ENCODE measurements at regions of chr2 and their contacts with region 1.

Region 1: DNA sequence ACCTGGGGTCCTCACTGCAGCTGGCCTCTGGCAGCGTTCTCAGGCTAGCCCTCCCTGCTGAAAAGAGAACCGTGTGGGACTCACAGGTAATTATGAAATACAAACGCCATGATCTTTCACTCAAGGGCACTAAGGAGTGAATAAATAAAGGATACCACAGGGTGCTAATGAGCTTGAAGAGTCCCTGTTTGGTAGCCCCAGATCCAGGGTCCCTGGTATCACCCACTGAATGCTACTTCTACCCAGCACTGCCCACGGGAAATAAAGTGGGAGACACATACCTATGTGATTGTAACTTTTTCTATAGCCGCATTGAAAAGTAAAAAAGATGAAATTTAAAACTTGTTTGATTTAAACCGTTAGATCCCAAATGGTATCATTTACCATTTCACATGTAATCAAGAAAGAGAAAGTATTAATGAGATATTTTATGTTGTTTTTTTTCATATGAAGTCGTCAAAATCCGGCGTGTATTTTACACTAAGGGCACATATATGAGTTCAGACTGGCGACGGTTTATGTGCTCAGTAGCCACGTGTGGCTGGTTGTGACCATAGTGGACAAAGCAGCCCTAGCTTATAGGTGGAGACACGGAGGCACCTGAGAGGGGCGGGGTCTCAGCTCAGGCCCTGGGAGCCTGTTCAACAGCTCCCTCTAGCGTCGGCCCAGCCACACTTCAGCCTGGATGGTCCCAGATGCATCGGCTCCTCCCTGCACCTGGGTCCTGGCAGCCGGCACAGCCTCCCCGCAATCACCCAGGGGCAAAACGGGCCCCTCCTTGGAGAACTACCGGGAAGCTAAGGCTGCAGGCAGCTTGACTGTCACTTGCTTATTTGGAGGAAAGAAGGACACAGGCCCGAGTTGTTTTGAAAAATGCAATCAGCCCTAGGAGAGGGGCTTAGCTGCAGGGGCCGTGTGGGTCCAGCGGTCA is 39.2 kb downstream of the ODC1 start:
- DNase-seq: peak; percentile 71
- ATAC-seq: peak; percentile 84
- H3K4me3 ChIP-seq: peak overlapping the region; percentile 58; the same call in 1 of the 2 replicates
- H3K27ac ChIP-seq: peak overlapping the region; percentile 84
- H3K4me1 ChIP-seq: peaks cover 44% of the 10 kb centered on the region
- H3K27me3 ChIP-seq: no peaks in the 10 kb centered on the region
- CTCF ChIP-seq: peak; percentile 95 to 99 (median 99); a peak in 5 of 6 replicates
- EP300 ChIP-seq: no peak; a peak in 1 of 4 replicates
- POLR2A ChIP-seq: no peak
- RAD21 ChIP-seq: peak; percentile 87

Region 2: GRCh38 chr2:10079234-10079869 is 329.6 kb before region 1 on chr2:
- CTCF ChIA-PET with region 1: interaction called, 92 read pairs
- POLR2A ChIA-PET with region 1: interaction called, 14 read pairs
- RAD21 ChIA-PET with region 1: interaction called, 44 read pairs
- SMC1A ChIA-PET with region 1: interaction called, 34 read pairs
- in situ Hi-C with region 1: no loop called
- intact Hi-C with region 1: no loop called
- DNase-seq: no peak
- ATAC-seq: peak; percentile 28
- H3K4me3 ChIP-seq: peak overlapping the region; percentile 57
- H3K27ac ChIP-seq: peak overlapping the region; percentile 40; the same call in 1 of the 2 replicates
- H3K4me1 ChIP-seq: peaks cover 50% of the 10 kb centered on the region
- H3K27me3 ChIP-seq: no peaks in the 10 kb centered on the region
- CTCF ChIP-seq: no peak
- EP300 ChIP-seq: no peak
- POLR2A ChIP-seq: no peak
- RAD21 ChIP-seq: no peak

Region 3: GRCh38 chr2:10133007-10133647 is 275.8 kb before region 1 on chr2:
- CTCF ChIA-PET with region 1: interaction called, 53 read pairs
- POLR2A ChIA-PET with region 1: interaction called, 15 read pairs
- RAD21 ChIA-PET with region 1: interaction called, 181 read pairs
- SMC1A ChIA-PET with region 1: interaction called, 45 read pairs
- in situ Hi-C with region 1: no loop called
- intact Hi-C with region 1: no loop called
- DNase-seq: no peak
- ATAC-seq: peak; percentile 8
- H3K4me3 ChIP-seq: no peak overlapping the region
- H3K27ac ChIP-seq: no peak overlapping the region
- H3K4me1 ChIP-seq: no peaks in the 10 kb centered on the region
- H3K27me3 ChIP-seq: no peaks in the 10 kb centered on the region
- CTCF ChIP-seq: no peak
- EP300 ChIP-seq: no peak
- POLR2A ChIP-seq: peak; percentile 66
- RAD21 ChIP-seq: no peak

Region 4: DNA sequence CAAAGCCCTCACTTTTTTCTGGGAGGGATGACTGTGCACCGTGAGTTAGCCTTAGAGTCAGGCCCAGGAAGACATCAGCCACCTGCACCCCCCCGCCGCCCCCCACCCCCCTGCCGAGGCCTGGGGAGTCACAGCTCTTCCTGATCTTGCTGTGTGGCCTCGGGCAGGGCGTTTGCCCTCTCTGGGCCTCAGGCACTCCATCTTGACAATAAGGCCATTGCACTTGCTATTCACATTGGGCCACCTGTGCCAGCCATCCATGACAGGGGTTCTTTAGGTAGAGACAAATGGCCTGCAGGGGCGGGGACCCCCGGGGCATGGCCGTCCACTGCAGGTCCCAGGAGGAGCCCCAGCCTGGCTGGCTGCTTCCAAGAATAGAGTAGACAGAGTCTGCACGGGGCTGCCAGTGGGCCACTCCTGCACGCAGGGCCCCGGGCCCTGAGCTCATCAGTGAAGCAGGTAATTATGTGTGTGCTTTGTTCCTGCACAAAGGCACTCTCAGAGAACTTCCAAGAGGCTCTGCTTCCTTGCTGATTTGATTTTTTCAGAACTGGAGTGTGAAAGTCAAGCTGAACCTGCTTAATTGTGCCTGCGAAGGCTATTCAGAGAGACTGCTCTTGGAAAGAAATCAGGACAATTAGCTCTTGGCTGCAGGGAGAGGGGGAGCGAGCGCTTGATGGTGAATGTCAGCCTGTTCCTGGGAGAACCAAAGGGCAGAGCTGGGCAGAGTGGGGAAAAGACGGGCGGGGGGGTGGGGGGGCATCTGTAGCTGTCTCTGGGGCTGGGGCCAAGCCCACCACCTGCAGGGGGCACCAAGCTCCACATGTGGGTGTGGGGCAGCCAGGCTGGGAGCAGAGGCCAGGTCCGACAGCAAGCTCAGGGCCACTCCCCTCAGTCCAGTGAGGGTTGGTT is 246.1 kb before region 1 on chr2:
- CTCF ChIA-PET with region 1: interaction called, 20 read pairs
- POLR2A ChIA-PET with region 1: no interaction called
- RAD21 ChIA-PET with region 1: interaction called, 12 read pairs
- SMC1A ChIA-PET with region 1: interaction called, 13 read pairs
- in situ Hi-C with region 1: no loop called
- intact Hi-C with region 1: no loop called
- DNase-seq: no peak
- ATAC-seq: no peak
- H3K4me3 ChIP-seq: no peak overlapping the region
- H3K27ac ChIP-seq: no peak overlapping the region
- H3K4me1 ChIP-seq: no peaks in the 10 kb centered on the region
- H3K27me3 ChIP-seq: no peaks in the 10 kb centered on the region
- CTCF ChIP-seq: peak in 1 of 3 experiments; percentile 7; a peak in 1 of 6 replicates
- EP300 ChIP-seq: no peak
- POLR2A ChIP-seq: no peak
- RAD21 ChIP-seq: no peak

Region 5: GRCh38 chr2:10302479-10303180 is 106.3 kb before region 1 on chr2 and contains the start of gene HPCAL1:
- CTCF ChIA-PET with region 1: interaction called, 87 read pairs
- POLR2A ChIA-PET with region 1: interaction called, 55 read pairs
- RAD21 ChIA-PET with region 1: interaction called, 154 read pairs
- SMC1A ChIA-PET with region 1: interaction called, 100 read pairs
- in situ Hi-C with region 1: no loop called
- intact Hi-C with region 1: loop called (anchors 1 kb)
- DNase-seq: peak; percentile 40
- ATAC-seq: peak; percentile 86
- H3K4me3 ChIP-seq: peak within 1 kb of the TSS; percentile 69
- H3K27ac ChIP-seq: peak within 1 kb of the TSS; percentile 61
- H3K4me1 ChIP-seq: peaks cover 16% of the 10 kb centered on the region
- H3K27me3 ChIP-seq: no peaks in the 10 kb centered on the region; a peak in 1 of 4 replicates
- CTCF ChIP-seq: peak; percentile 41 to 52 (median 45); a peak in 5 of 6 replicates
- EP300 ChIP-seq: no peak
- POLR2A ChIP-seq: no peak
- RAD21 ChIP-seq: peak; percentile 19; the same call in 1 of the 2 replicates
- polyA plus RNA-seq, gene HPCAL1: 0.40 to 1.3 TPM

Region 6: DNA sequence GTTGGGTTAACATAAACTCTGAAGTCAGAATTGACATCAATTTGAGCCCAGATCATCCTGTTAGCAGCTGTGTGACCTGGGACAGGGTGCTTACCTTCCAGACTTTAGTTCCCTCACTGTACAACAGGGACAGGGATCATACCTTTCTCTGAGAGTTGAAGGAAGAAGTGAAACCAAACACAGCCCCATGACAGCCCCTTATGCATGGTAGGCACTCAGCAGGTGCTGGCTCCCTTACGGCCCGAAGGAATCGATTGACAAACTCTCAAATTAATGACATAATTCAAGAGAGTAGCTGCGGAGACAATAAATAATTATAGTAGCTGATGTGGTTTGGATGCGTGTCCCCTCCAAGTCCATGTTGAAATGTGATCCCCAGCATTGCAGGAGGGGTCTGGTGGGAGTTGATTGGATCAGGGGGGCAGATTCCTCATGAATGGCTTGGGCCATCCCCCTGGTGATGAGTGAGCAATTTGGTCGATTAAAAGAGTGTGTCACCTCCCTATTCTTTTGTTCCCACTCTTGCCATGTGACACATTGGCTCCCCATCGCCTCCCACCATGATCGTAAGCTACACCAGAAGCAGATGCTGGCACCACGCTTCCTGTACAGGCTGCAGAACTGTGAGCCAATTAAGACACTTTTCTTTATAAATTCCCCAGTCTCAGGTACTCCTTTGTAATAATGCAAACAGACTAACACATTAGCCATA is 33.2 kb before region 1 on chr2:
- CTCF ChIA-PET with region 1: interaction called, 41 read pairs
- POLR2A ChIA-PET with region 1: interaction called, 77 read pairs
- RAD21 ChIA-PET with region 1: interaction called, 129 read pairs
- SMC1A ChIA-PET with region 1: interaction called, 112 read pairs
- in situ Hi-C with region 1: no loop called
- intact Hi-C with region 1: no loop called
- DNase-seq: no peak
- ATAC-seq: peak; percentile 74
- H3K4me3 ChIP-seq: no peak overlapping the region
- H3K27ac ChIP-seq: no peak overlapping the region
- H3K4me1 ChIP-seq: peaks cover 30% of the 10 kb centered on the region
- H3K27me3 ChIP-seq: no peaks in the 10 kb centered on the region
- CTCF ChIP-seq: no peak
- EP300 ChIP-seq: no peak
- POLR2A ChIP-seq: no peak
- RAD21 ChIP-seq: no peak

Region 7: DNA sequence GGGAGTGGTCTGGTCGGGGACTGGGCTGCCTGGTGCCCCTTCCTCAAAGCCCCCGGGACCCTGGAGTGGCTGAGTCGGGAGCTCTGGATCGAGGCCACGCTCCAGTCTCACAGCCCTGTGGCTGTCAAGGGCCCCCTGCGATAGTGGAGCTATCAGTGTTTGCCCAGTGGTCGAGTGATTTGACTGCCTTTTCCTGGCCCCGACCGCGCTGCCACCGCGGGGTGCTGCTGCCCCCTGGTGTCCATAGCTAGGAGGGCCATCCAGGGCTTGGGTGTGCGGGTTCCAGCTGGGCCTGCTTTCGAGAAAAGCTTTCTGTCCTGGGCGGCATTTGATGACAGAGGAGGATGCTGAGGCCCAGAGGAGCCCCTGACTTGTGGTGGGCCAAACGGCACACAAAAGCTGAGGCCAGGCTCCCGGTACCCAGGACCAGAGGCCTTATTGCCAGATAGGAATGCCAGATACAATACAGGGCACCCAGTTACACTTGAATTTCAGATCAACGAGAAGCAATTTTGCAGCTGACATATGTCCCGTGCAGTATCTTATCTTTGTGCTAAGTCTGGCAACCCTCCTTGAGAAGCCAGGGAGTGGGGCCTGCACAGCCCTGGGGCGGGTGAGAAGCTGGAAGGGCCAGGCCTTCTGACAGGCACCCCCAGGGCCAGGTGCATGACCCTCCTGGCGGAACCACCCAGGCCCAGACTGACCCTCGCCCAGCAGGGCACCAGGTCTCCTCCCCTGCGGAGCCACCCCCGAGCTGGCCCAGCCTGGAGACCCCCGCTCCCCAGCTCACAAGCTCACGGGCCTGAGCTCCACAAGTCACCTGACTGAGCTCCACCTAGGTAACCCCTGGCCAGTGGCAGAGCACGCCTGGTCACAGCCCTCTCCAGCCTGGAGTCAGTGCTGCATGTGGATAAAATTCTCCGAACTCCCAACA is 26.2 kb after region 1 on chr2:
- CTCF ChIA-PET with region 1: interaction called, 166 read pairs
- POLR2A ChIA-PET with region 1: interaction called, 16 read pairs
- RAD21 ChIA-PET with region 1: interaction called, 178 read pairs
- SMC1A ChIA-PET with region 1: interaction called, 75 read pairs
- in situ Hi-C with region 1: no loop called
- intact Hi-C with region 1: loop called (anchors 1 kb)
- DNase-seq: no peak
- ATAC-seq: peak; percentile 86
- H3K4me3 ChIP-seq: no peak overlapping the region
- H3K27ac ChIP-seq: no peak overlapping the region
- H3K4me1 ChIP-seq: peaks cover 3% of the 10 kb centered on the region; the same call in 1 of the 2 replicates
- H3K27me3 ChIP-seq: no peaks in the 10 kb centered on the region
- CTCF ChIP-seq: peak; percentile 96 to 99 (median 98)
- EP300 ChIP-seq: no peak
- POLR2A ChIP-seq: no peak
- RAD21 ChIP-seq: peak; percentile 98

Region 8: DNA sequence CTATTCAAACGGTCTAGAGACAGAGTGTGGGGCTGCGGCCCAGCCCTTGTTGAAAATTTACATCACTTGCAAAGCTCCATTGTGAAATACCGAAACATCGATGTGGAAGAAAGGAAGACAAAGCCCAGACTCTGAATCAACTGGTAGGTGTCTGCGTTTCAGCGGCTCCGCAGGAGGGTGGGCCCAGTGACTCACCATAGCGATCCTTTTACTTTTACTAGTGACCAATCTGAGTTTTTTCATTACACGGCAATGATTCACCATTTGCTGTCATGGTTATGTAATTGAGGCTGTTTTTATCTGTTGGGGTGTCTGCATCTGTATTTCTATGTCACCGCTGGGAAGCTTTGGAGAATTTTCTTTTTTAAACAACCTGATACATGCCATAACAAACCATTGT is 105.8 kb after region 1 on chr2:
- CTCF ChIA-PET with region 1: no interaction called
- POLR2A ChIA-PET with region 1: no interaction called
- RAD21 ChIA-PET with region 1: no interaction called
- SMC1A ChIA-PET with region 1: no interaction called
- in situ Hi-C with region 1: no loop called
- intact Hi-C with region 1: no loop called
- DNase-seq: no peak
- ATAC-seq: no peak
- H3K4me3 ChIP-seq: no peak overlapping the region
- H3K27ac ChIP-seq: no peak overlapping the region
- H3K4me1 ChIP-seq: no peaks in the 10 kb centered on the region
- H3K27me3 ChIP-seq: no peaks in the 10 kb centered on the region
- CTCF ChIP-seq: no peak
- EP300 ChIP-seq: no peak
- POLR2A ChIP-seq: no peak
- RAD21 ChIP-seq: no peak

Region 9: DNA sequence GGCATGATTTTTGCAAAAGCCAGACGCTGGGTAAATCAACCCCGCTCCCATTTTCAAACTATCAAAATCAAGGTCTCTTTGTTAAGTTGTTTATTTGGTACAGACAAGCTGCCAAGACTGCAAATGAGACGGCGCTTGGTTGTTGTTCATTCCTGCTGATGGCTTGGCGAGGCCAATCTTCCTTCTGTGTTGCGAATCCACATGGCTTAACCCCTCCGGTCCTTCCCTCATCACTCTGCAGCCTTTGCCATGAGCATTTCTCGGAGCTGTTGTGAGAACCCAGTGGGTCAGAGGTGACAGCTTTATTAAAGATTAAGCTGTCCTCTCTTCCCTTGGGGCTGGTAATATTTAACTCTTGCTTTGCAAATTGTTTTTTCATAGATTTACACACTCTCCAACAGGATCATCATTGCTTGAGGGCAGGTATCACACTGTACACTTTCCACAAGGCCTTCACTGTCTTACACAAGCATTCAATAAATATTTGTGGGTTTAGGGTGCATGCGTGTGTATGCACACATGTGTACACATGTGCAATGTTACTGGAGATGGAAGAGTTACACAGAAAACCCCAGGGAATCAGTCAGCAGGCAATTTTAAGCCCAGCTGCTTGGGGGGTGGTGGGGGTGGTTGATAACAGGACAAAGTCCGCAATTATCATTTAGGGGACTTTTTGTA is 475.0 kb after region 1 on chr2:
- CTCF ChIA-PET with region 1: no interaction called
- POLR2A ChIA-PET with region 1: no interaction called
- RAD21 ChIA-PET with region 1: no interaction called
- SMC1A ChIA-PET with region 1: no interaction called
- in situ Hi-C with region 1: no loop called
- intact Hi-C with region 1: no loop called
- DNase-seq: no peak
- ATAC-seq: no peak; the same call in 2 of the 3 replicates
- H3K4me3 ChIP-seq: no peak overlapping the region
- H3K27ac ChIP-seq: no peak overlapping the region
- H3K4me1 ChIP-seq: no peaks in the 10 kb centered on the region; the same call in 1 of the 2 replicates
- H3K27me3 ChIP-seq: peaks cover 0 to 6% of the 10 kb centered on the region in 2 experiments; a peak in 2 of 4 replicates
- CTCF ChIP-seq: no peak
- EP300 ChIP-seq: no peak
- POLR2A ChIP-seq: no peak
- RAD21 ChIP-seq: no peak